Lower leg skin (tissue), 4 donors: ENCODE measurements at regions of chr13 and their contacts with region 1.

Region 1: DNA sequence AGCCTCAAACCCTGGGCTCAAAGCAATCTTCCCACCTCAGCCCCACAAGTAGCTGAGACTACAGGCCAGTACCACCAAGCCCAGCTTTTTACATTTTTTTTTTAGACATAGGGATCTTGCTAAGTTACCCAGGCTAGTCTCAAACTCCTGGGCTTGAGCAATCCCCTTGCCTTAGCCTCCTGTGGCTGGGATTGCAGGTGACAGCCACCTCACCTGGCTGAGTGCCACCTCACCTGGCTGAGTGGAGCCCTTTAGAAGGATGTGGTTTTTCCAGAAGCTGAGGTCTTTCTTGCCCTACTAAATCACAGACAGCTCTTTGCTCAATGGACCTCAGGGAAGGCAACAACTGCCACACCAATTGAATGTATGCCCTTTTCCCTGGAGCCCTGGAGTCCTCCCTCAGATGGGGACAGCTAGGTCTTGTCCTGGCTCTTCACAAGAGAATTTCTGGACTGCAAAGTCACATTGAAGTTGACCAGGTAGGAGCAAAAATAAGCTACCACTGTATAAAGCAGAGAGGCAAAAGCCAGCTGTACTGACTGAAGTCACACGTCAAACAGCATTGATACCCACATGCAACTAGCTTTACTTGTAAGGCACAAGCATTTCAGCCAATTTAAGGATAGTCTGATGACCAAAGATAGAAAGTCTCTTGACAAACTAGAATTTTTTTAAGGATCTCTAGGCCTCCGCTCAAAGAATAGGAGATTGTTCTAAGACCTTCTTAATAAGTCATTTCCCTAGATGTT is 14.0 kb downstream of the PDX1 start:
- DNase-seq: no peak
- H3K4me3 ChIP-seq: no peak overlapping the region
- CTCF ChIP-seq: no peak
- POLR2A ChIP-seq: no peak

Region 2: GRCh38 chr13:27391471-27391870 is 542.3 kb before region 1 on chr13:
- intact Hi-C with region 1: no loop called
- DNase-seq: no peak
- H3K4me3 ChIP-seq: no peak overlapping the region
- CTCF ChIP-seq: no peak
- POLR2A ChIP-seq: no peak

Region 3: DNA sequence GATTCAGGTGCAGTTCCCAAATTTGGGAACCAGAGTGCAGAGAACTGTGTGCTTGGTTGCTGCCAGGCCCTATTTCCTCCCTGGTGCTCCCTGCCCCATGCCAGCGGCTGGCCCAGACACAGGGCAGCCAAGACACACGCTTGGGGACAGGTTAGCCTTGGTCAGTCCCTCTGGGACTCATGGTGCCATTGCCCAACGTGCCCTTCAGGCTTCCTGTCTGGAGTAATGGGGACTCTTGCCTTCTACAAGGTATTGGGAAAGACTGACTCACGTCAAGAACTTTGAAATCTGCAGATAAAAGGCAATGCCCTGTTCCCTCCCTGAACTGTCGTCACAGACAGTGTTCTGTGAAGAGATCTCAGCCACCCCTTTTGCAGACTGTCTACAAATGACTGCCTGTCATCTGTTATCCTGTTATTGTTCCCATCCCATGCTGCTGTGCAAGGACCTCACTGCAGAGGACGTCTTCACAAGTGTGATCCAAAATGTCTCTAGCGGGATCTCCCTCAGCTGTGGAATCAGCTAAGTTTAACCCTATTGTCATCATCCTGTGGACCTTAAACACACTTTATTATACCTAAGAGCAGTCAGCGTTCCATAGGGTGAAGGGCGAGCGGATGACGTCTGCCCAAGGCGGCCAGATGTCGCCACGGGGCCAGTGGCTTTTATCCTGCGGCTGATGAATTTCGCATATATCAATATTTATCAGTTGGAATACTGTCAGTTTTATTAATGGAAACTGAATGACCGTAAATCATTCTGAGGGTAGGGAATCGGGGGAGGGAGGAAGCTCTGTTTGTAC is 82.5 kb before region 1 on chr13:
- intact Hi-C with region 1: loop called (anchors 5 kb)
- DNase-seq: no peak
- H3K4me3 ChIP-seq: no peak overlapping the region
- CTCF ChIP-seq: no peak
- POLR2A ChIP-seq: no peak